ENCODE measurements at regions of chr1 and their contacts with region 1.

Region 1: DNA sequence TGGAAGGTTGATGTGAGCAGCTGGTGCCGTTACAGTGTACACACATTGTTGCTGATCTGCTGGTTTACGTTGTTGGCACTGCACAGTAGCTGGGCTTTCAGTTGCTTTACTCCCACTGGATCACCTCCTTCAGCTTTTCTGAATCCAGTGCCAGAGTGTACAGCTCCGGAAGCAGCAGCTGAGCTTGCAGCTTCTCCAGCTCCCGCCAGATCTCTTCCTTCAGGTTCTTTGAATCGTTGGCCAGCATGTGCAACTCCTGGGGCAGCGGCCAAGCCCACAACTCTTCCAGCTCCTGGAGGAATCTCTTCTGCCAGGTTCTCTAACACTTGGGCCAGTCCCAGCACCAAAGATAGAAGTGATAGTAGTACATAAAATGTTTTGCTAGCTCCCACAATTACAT is 149.7 kb upstream of the RRP15 start:
- DNase-seq: no peak
- H3K4me3 ChIP-seq: no peak overlapping the region
- H3K27ac ChIP-seq: no peak overlapping the region
- H3K4me1 ChIP-seq: no peaks in the 10 kb centered on the region
- H3K27me3 ChIP-seq: no peaks in the 10 kb centered on the region
- CTCF ChIP-seq: no peak
- POLR2A ChIP-seq: no peak

Region 2: GRCh38 chr1:219324629-219325367 is 1189.4 kb after region 1 on chr1:
- intact Hi-C with region 1: loop called (anchors 5 kb)
- DNase-seq: no peak
- H3K4me3 ChIP-seq: no peak overlapping the region
- H3K27ac ChIP-seq: no peak overlapping the region
- H3K4me1 ChIP-seq: no peaks in the 10 kb centered on the region
- H3K27me3 ChIP-seq: no peaks in the 10 kb centered on the region
- CTCF ChIP-seq: no peak
- POLR2A ChIP-seq: no peak